ENCODE measurements at regions of chr6 and their contacts with region 1.

Region 1: GRCh38 chr6:136226027-136226673 is 24.0 kb downstream of the MTFR2 start:
- DNase-seq: peak in 8 of 10 donors; percentile 11 to 85 (median 51)

Region 2: DNA sequence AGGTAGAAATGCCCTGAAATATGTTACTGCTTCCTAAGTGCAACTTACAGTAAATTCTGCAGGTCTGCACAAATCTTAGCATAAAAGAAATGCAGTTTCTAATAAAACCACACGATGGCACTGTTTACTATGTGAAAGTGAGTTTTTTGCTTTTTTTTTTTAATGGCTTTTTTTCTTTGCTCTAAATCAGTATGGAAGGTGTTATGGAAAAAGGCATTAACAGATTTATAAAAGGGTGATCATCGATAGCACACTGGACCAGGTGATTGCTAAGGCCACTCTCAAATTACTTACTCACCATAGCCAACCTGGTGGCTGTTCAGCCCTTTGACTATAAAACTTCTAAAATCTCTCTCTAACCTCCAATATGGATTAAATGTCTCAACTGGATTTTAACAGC is 774.5 kb before region 1 on chr6:
- intact Hi-C with region 1: loop called (anchors 5 kb)
- DNase-seq: no peak

Region 3: GRCh38 chr6:135535989-135536414 is 690.1 kb before region 1 on chr6:
- intact Hi-C with region 1: loop called (anchors 1 kb)
- DNase-seq: no peak

Region 4: DNA sequence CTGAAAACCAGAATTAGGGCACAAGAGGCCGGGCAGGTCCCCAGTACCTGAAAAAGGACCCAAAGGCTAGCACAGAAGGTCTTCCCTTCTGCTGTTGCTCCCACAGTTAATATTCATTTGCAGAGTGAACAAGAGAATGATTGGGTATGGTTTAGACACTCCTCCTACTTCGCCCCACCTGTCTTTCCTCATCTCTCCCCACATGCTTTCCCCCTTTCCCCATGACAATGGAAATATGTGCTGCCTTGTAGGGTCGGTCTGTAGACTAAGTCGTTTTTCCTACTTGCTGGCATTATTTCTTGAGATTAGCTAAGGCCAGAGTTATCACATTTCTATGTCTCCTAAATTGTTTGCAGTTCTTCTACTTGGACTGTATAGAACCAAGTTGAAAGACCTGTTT is 192.7 kb before region 1 on chr6:
- intact Hi-C with region 1: loop called (anchors 1 kb)
- DNase-seq: no peak

Measured in posterior cingulate gyrus (tissue), 11 donors.